PC-3 (cell line): ENCODE measurements at regions of chr6 and their contacts with region 1.

Region 1: DNA sequence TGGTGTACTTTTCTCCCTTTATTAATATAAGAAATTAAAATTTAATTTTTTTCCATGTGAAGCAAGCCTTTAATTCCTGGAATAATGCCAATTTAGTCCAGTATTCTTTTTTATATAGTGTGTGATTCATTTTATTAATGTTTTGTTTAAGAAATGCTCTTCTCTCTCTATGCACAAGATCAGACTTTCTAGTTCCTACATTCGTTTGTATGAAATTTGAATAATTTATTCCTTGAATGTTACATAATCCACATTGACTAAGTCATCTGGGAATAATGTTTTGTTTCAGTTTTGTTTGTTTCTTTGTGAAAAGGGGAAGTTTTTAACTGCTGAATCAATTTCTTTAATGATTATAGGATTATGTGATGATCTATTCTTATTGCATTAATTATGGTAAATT is 181.4 kb upstream of the ID4 start:
- DNase-seq: no peak
- ATAC-seq: no peak
- H3K4me3 ChIP-seq: no peak overlapping the region
- H3K27ac ChIP-seq: no peak overlapping the region
- H3K4me1 ChIP-seq: no peaks in the 10 kb centered on the region
- H3K27me3 ChIP-seq: no peaks in the 10 kb centered on the region
- CTCF ChIP-seq: no peak

Region 2: GRCh38 chr6:18613319-18613925 is 1042.3 kb before region 1 on chr6:
- CTCF ChIA-PET with region 1: no interaction called
- POLR2A ChIA-PET with region 1: interaction called, 39 read pairs
- intact Hi-C with region 1: no loop called
- DNase-seq: no peak
- ATAC-seq: no peak
- H3K4me3 ChIP-seq: no peak overlapping the region
- H3K27ac ChIP-seq: no peak overlapping the region
- H3K4me1 ChIP-seq: no peaks in the 10 kb centered on the region
- H3K27me3 ChIP-seq: peaks cover 43% of the 10 kb centered on the region
- CTCF ChIP-seq: no peak

Region 3: DNA sequence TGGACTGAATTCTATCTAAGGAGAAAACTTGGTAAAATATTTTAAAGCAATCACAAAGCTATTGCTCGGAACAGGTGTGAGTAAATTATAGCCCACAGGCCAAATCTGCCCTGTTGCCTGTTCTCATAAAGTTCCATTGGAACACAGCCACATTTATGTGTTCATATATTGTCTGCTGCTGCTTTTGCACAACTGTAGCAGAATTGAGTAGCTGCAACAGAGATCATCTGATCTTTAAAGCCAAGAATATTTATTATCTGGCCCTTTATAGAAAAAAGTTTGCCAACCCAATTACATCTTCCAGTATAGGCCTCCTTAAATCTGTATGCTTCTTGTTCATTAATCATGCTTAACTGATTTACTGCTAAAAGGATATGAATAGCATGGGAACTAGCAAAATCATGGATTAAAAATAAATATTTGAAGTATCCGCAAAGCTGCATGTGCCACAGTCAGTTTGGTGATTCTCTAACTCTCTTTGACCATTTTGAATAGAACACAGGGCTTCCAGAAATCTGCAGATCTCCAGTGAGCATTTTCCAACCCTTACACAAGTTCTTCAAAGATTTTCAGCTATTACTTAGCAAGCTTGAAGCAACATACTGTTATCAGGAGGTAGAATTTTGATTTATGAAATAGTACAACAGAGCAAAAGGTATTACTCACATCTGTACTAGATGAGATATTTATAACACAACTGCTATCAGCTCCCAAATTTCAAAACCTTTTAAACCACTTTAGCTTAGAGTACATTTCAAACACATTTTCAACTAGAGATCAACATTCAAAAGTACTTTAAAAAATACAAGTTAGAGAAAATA is 131.2 kb before region 1 on chr6:
- CTCF ChIA-PET with region 1: no interaction called
- POLR2A ChIA-PET with region 1: no interaction called
- intact Hi-C with region 1: no loop called
- DNase-seq: no peak
- ATAC-seq: no peak
- H3K4me3 ChIP-seq: no peak overlapping the region
- H3K27ac ChIP-seq: no peak overlapping the region
- H3K4me1 ChIP-seq: no peaks in the 10 kb centered on the region
- H3K27me3 ChIP-seq: no peaks in the 10 kb centered on the region
- CTCF ChIP-seq: no peak